ENCODE measurements at regions of chrX and their contacts with region 1.

Region 1: GRCh38 chrX:130174051-130174704 is 2.4 kb downstream of the RAB33A start:
- DNase-seq: peak; percentile 61
- ATAC-seq: peak; percentile 80
- H3K4me3 ChIP-seq: no peak overlapping the region
- H3K27ac ChIP-seq: peak overlapping the region; percentile 70
- H3K4me1 ChIP-seq: peaks cover 20% of the 10 kb centered on the region
- H3K27me3 ChIP-seq: no peaks in the 10 kb centered on the region
- CTCF ChIP-seq: no peak

Region 2: DNA sequence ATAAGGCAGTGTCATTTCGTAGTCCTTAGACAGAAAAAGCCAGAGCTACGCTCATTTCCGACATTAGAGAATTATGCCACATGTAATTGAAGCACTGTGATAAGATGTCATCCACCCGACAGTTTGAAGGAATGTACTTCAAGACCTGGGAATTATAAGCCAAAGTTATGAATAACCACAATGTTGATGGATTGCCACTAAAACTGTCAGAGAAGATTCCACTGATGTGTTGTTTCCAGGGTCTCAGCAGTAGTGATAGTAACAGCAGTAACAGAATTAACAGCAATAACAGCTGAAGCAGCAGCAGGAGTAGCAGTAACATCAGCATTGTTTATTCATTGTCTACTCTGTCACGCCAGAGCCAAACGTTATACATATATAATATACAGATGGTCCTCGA is 22.3 kb after region 1 on chrX:
- CTCF ChIA-PET with region 1: no interaction called
- POLR2A ChIA-PET with region 1: interaction called, 10 read pairs
- intact Hi-C with region 1: no loop called
- DNase-seq: no peak
- ATAC-seq: no peak
- H3K4me3 ChIP-seq: no peak overlapping the region
- H3K27ac ChIP-seq: no peak overlapping the region
- H3K4me1 ChIP-seq: no peaks in the 10 kb centered on the region
- H3K27me3 ChIP-seq: no peaks in the 10 kb centered on the region
- CTCF ChIP-seq: no peak

Region 3: DNA sequence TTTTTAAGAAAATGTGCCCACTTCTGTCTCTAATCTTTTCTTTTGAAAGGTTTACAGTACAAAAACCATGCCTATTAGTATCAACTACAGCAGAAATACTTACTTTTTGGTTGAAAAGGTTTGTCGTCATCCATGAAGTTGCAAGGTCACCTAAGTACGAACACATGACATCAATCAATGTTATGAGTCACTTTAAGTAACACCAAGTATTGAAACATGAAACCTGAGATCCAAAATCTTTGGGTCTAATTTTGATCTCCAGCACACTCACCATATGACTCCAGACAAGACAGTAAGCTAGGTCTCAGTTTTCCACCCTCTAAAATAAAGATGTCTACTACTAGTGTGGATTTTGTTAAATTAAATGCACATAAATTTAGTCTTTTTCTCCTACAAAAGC is 86.1 kb after region 1 on chrX:
- CTCF ChIA-PET with region 1: no interaction called
- POLR2A ChIA-PET with region 1: interaction called, 16 read pairs
- intact Hi-C with region 1: no loop called
- DNase-seq: peak; percentile 7
- ATAC-seq: no peak
- H3K4me3 ChIP-seq: no peak overlapping the region
- H3K27ac ChIP-seq: no peak overlapping the region
- H3K4me1 ChIP-seq: peaks cover 12% of the 10 kb centered on the region; the same call in 1 of the 2 replicates
- H3K27me3 ChIP-seq: no peaks in the 10 kb centered on the region
- CTCF ChIP-seq: no peak

Region 4: DNA sequence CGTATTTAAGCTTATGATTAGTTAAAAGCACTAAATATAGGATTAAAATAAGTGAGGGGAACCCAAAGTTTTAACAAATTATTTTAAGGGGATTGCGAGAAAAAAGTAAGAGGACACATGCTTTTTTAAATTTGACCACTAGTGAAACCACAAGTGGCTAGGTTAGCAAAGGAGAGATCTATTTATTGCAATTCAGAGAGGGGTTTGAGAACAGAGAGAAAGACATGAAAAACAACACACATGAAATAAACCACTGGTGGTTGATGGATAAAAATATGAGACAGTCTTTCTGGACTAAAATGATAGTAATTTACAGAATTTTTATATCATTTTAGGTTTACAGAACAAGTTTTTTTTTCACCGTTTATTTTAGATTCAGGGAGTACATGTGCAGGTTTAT is 177.4 kb after region 1 on chrX:
- CTCF ChIA-PET with region 1: no interaction called
- POLR2A ChIA-PET with region 1: no interaction called
- intact Hi-C with region 1: no loop called
- DNase-seq: no peak
- ATAC-seq: no peak
- H3K4me3 ChIP-seq: no peak overlapping the region
- H3K27ac ChIP-seq: no peak overlapping the region
- H3K4me1 ChIP-seq: no peaks in the 10 kb centered on the region
- H3K27me3 ChIP-seq: no peaks in the 10 kb centered on the region
- CTCF ChIP-seq: no peak